ENCODE measurements at regions of chr7 and their contacts with region 1.

Region 1: GRCh38 chr7:26090927-26091519 is 61.0 kb upstream of the NFE2L3 start:
- DNase-seq: peak; percentile 35 to 84
- H3K4me3 ChIP-seq: no peak overlapping the region
- H3K4me1 ChIP-seq: no peaks in the 10 kb centered on the region
- H3K27me3 ChIP-seq: no peaks in the 10 kb centered on the region

Region 2: GRCh38 chr7:26365077-26365900 is 274.3 kb after region 1 on chr7:
- in situ Hi-C with region 1: loop called (anchors 10 kb)
- DNase-seq: peak; percentile 70 to 76
- H3K4me3 ChIP-seq: no peak overlapping the region
- H3K4me1 ChIP-seq: no peaks in the 10 kb centered on the region; the same call in 1 of the 2 replicates
- H3K27me3 ChIP-seq: no peaks in the 10 kb centered on the region